Adrenal gland (tissue), 19 donors: ENCODE measurements at regions of chr20 and their contacts with region 1.

Region 1: DNA sequence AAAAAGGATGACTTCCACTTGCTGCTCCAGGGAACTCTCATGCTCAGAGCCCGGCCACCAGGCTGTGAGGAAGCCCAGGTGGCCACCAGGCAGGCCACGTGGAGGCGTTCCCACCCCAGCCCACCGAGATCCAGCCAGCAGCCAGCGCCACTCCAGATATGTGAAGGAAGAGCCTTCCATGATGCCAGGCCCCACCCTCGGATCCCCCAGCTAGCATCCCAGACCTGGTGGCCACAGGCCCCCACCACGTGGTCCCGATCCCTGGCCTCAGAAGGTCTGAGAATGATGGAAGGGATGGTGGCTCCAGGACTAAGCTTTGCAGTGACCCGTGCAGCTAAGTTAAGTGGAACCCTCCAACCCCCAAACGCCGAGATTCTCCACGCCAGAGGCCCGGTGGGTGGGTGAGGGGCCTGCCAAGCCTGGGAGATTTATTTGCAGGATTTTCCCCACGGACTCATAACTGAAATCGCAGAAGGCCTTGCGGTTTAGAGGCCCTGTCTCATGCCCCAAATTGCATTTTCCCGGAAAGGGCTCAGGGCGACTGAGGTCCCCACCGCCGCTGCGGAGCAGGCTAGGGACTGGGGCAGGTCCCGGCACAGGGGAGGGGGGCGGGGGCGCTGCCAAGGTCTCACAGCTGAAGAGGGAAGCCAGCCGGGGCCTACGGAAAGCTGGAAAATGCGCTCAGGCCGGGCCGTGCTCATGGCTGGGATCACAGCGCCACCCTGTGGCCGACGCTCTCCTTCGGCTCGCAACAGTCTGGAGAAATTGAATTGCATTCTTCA is 31.1 kb upstream of the CST7 start:
- DNase-seq: peak; percentile 23 to 82 (median 67)
- H3K4me3 ChIP-seq: no peak overlapping the region
- H3K27ac ChIP-seq: no peak overlapping the region
- H3K4me1 ChIP-seq: peaks cover 0 to 7% of the 10 kb centered on the region in 2 donors
- H3K27me3 ChIP-seq: no peaks in the 10 kb centered on the region
- CTCF ChIP-seq: peak; percentile 72 to 91 (median 82)
- POLR2A ChIP-seq: no peak

Region 2: GRCh38 chr20:24160563-24161375 is 757.2 kb before region 1 on chr20:
- intact Hi-C with region 1: loop called in 1 of 2 experiments (anchors 5 kb)
- DNase-seq: peak; percentile 41 to 75 (median 60)
- H3K4me3 ChIP-seq: no peak overlapping the region
- H3K27ac ChIP-seq: no peak overlapping the region
- H3K4me1 ChIP-seq: no peaks in the 10 kb centered on the region
- H3K27me3 ChIP-seq: no peaks in the 10 kb centered on the region
- CTCF ChIP-seq: peak; percentile 48 to 73 (median 64)
- POLR2A ChIP-seq: no peak

Region 3: GRCh38 chr20:24590178-24590982 is 327.6 kb before region 1 on chr20:
- intact Hi-C with region 1: no loop called
- DNase-seq: no peak
- H3K4me3 ChIP-seq: no peak overlapping the region
- H3K27ac ChIP-seq: no peak overlapping the region
- H3K4me1 ChIP-seq: no peaks in the 10 kb centered on the region
- H3K27me3 ChIP-seq: no peaks in the 10 kb centered on the region
- CTCF ChIP-seq: no peak
- POLR2A ChIP-seq: no peak

Region 4: GRCh38 chr20:24978513-24978912 is 60.5 kb after region 1 on chr20:
- intact Hi-C with region 1: loop called in 1 of 2 experiments (anchors 10 kb)
- DNase-seq: no peak
- H3K4me3 ChIP-seq: no peak overlapping the region
- H3K27ac ChIP-seq: peak overlapping the region in 1 of 5 donors; percentile 26
- H3K4me1 ChIP-seq: peaks cover 6 to 12% of the 10 kb centered on the region in 2 donors
- H3K27me3 ChIP-seq: no peaks in the 10 kb centered on the region
- CTCF ChIP-seq: no peak
- POLR2A ChIP-seq: no peak